ENCODE measurements at regions of chr17 and their contacts with region 1.

Region 1: GRCh38 chr17:789160-789840 is 7.1 kb downstream of the MRM3 start:
- DNase-seq: no peak
- ATAC-seq: no peak
- H3K4me3 ChIP-seq: no peak overlapping the region
- H3K27ac ChIP-seq: no peak overlapping the region
- H3K4me1 ChIP-seq: peaks cover under 1 to 4% of the 10 kb centered on the region in 2 experiments; a peak in 3 of 5 replicates
- H3K27me3 ChIP-seq: no peaks in the 10 kb centered on the region
- CTCF ChIP-seq: no peak
- EP300 ChIP-seq: no peak
- POLR2A ChIP-seq: no peak
- RAD21 ChIP-seq: no peak

Region 2: DNA sequence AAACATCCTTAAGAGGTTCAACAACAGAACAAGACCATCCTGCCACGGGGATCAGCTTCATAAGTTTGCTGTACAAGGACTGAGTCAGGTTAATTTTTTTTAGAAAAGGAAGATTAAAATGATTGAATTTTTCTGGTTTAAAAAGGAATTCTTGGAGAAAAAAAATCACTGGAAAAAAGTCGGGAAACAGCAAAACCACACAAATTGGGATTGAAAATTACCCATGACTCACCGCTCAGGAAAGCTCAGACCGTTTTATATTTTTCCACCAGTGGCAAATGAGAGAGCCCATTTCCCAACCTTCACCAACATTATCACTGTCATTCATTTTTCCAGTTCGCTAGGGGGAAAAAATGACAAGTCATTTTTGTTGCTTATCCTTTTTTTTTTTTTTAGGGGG is 39.5 kb after region 1 on chr17:
- CTCF ChIA-PET with region 1: no interaction called
- POLR2A ChIA-PET with region 1: no interaction called
- in situ Hi-C with region 1: no loop called
- intact Hi-C with region 1: no loop called
- DNase-seq: no peak
- ATAC-seq: no peak
- H3K4me3 ChIP-seq: no peak overlapping the region
- H3K27ac ChIP-seq: no peak overlapping the region
- H3K4me1 ChIP-seq: no peaks in the 10 kb centered on the region
- H3K27me3 ChIP-seq: peaks cover 20 to 44% of the 10 kb centered on the region in 2 experiments; a peak in 4 of 5 replicates
- CTCF ChIP-seq: no peak
- EP300 ChIP-seq: no peak
- POLR2A ChIP-seq: no peak
- RAD21 ChIP-seq: no peak

Region 3: DNA sequence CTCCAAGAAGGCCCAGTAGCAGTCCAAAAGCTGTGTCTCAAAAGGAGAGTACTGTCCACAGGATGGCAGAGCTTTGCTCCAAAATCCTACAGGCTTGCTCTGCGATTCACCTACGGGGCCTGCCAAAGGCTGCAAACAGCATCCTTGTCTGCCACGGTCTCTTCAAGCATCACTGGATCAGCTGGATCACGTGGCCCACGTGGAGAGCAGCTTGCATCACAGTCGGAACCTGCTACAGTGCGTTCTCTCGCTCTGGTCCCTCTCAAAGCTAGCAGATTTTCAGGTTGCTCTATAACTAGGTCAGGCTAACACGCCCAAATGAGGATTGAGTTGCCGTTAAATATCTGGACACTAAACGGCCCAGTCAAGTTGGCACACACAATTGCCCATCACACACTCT is 199.3 kb after region 1 on chr17:
- CTCF ChIA-PET with region 1: no interaction called
- POLR2A ChIA-PET with region 1: no interaction called
- in situ Hi-C with region 1: loop called (anchors 5 kb)
- intact Hi-C with region 1: no loop called
- DNase-seq: no peak
- ATAC-seq: no peak
- H3K4me3 ChIP-seq: no peak overlapping the region
- H3K27ac ChIP-seq: no peak overlapping the region
- H3K4me1 ChIP-seq: no peaks in the 10 kb centered on the region; a peak in 1 of 5 replicates
- H3K27me3 ChIP-seq: peaks cover 0 to 23% of the 10 kb centered on the region in 2 experiments; a peak in 3 of 5 replicates
- CTCF ChIP-seq: no peak
- EP300 ChIP-seq: no peak
- POLR2A ChIP-seq: no peak
- RAD21 ChIP-seq: no peak